ENCODE measurements at regions of chr5 and their contacts with region 1.

Region 1: GRCh38 chr5:102583276-102584124 is 84.7 kb upstream of the SLCO6A1 start:
- DNase-seq: peak; percentile 66
- H3K4me3 ChIP-seq: no peak overlapping the region
- H3K27ac ChIP-seq: no peak overlapping the region
- H3K4me1 ChIP-seq: peaks cover 13% of the 10 kb centered on the region
- H3K27me3 ChIP-seq: no peaks in the 10 kb centered on the region
- CTCF ChIP-seq: peak; percentile 75

Region 2: GRCh38 chr5:102670224-102670836 is 86.8 kb after region 1 on chr5:
- CTCF ChIA-PET with region 1: no interaction called
- POLR2A ChIA-PET with region 1: no interaction called
- intact Hi-C with region 1: loop called (anchors 2 kb)
- DNase-seq: peak; percentile 56
- H3K4me3 ChIP-seq: no peak overlapping the region
- H3K27ac ChIP-seq: no peak overlapping the region
- H3K4me1 ChIP-seq: peaks cover 10% of the 10 kb centered on the region
- H3K27me3 ChIP-seq: no peaks in the 10 kb centered on the region
- CTCF ChIP-seq: peak; percentile 80

Region 3: DNA sequence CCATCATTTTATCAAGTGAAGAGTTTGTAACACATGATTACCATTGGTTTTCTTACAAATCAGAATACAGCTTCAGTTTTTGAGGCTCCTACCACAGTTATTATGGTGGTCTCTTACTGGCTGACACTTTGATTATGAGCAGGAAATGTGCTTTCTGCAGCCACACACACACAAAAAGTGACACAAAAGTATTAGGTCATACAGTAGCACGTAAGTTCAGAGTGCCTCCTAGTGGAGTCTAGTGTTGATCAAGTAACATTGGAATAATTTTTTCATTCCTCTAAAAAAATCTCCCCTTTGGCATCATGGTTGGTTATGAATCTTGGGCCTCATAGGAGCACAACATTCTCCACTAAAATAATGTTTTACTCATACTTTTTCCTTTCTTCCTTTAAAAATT is 209.2 kb after region 1 on chr5:
- CTCF ChIA-PET with region 1: no interaction called
- POLR2A ChIA-PET with region 1: no interaction called
- intact Hi-C with region 1: loop called (anchors 5 kb)
- DNase-seq: peak; percentile 61
- H3K4me3 ChIP-seq: no peak overlapping the region
- H3K27ac ChIP-seq: no peak overlapping the region
- H3K4me1 ChIP-seq: peaks cover 59% of the 10 kb centered on the region
- H3K27me3 ChIP-seq: no peaks in the 10 kb centered on the region
- CTCF ChIP-seq: peak; percentile 55

Region 4: DNA sequence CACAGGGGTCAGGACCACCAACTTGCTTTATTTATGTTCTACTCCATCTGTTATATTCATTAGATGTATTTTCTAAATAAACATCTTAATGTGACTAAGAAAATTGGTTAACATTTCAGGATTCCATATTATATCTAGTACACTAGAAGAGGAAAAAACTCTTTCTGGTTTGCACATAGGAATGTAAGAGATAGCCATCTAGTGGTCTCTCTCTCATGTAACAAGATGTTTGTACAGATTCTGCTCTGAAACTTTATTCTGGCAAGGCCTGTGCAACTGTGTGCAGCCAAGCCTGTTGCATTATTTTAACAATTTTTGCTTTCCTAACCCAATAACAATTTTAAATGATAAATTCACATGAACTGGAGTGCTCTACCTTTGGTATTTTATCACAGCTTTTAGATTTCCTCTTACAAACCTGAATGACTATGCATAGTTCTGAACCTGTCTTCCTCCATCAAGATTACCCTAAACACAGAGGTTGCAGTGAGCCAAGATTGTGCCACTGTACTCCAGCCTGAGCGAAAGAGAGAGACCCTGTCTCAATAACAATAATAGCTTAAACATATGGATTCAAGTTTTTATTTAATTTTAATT is 388.3 kb after region 1 on chr5:
- CTCF ChIA-PET with region 1: no interaction called
- POLR2A ChIA-PET with region 1: no interaction called
- intact Hi-C with region 1: loop called (anchors 2 kb)
- DNase-seq: peak; percentile 68
- H3K4me3 ChIP-seq: no peak overlapping the region
- H3K27ac ChIP-seq: no peak overlapping the region
- H3K4me1 ChIP-seq: peaks cover 42% of the 10 kb centered on the region
- H3K27me3 ChIP-seq: no peaks in the 10 kb centered on the region
- CTCF ChIP-seq: peak; percentile 70

Region 5: DNA sequence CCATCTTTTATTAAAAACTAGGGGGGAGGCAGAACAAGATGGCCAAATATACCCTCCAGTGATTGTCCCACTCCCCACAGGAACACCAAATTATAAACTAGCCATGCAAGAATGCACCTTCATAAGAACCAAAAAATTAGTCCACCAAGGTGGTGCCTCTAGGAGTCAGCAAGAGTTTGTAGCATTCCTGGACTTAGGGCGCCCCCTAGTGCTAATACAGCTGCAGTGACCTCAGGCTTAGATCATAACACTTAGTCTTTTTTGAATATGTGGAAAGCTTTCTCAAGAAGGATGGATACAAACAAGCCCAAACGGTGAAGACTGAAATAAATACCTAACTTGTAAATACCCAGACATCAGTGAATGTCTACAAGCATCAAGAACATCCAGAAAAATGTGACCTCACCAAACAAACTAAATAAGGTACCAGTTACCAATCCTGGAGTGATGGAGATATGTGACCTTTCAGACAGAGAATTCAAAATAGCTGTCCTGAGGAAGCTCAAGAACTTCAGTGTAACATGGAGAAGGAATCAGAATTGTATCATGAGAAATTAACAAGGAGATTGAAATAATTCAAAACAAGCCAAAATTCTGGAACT is 555.9 kb after region 1 on chr5:
- CTCF ChIA-PET with region 1: no interaction called
- POLR2A ChIA-PET with region 1: no interaction called
- intact Hi-C with region 1: loop called (anchors 1 kb)
- DNase-seq: peak; percentile 82
- H3K4me3 ChIP-seq: no peak overlapping the region
- H3K27ac ChIP-seq: no peak overlapping the region
- H3K4me1 ChIP-seq: no peaks in the 10 kb centered on the region
- H3K27me3 ChIP-seq: no peaks in the 10 kb centered on the region
- CTCF ChIP-seq: peak; percentile 96

Region 6: GRCh38 chr5:103224118-103224893 is 640.8 kb after region 1 on chr5:
- CTCF ChIA-PET with region 1: interaction called, 3 read pairs
- POLR2A ChIA-PET with region 1: no interaction called
- intact Hi-C with region 1: loop called (anchors 1 kb)
- DNase-seq: peak; percentile 87
- H3K4me3 ChIP-seq: peak overlapping the region; percentile 19
- H3K27ac ChIP-seq: no peak overlapping the region
- H3K4me1 ChIP-seq: peaks cover 3% of the 10 kb centered on the region
- H3K27me3 ChIP-seq: no peaks in the 10 kb centered on the region
- CTCF ChIP-seq: peak; percentile 83

Measured in A673 (cell line).